RWPE1 (cell line): ENCODE measurements at regions of chr6 and their contacts with region 1.

Region 1: GRCh38 chr6:158991017-158991723 is 8.8 kb downstream of the RSPH3 start:
- DNase-seq: no peak
- H3K27ac ChIP-seq: no peak overlapping the region
- CTCF ChIP-seq: no peak

Region 2: GRCh38 chr6:158795516-158796075 is 195.6 kb before region 1 on chr6:
- CTCF ChIA-PET with region 1: interaction called, 12 read pairs
- POLR2A ChIA-PET with region 1: no interaction called
- DNase-seq: no peak
- H3K27ac ChIP-seq: no peak overlapping the region
- CTCF ChIP-seq: no peak

Region 3: DNA sequence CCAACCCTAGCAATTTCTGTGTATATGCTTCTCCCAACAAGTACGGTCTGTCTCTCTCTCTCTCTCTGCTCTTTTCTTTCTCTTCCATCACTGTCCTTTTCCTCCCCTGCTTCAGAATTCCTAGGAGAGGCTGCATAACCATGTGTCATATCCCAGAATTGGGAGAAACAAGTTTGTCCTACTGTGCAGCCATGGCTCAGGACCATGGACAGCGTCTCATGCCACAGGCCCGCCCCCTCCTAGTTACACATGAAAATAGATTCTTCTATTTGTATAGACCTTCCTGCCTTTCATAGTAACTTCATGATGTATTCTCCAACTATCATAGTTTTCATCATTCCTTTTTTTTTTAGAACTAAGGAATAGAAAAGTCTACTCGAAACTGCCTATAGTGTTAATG is 276.0 kb after region 1 on chr6:
- CTCF ChIA-PET with region 1: no interaction called
- POLR2A ChIA-PET with region 1: no interaction called
- DNase-seq: peak; percentile 55
- H3K27ac ChIP-seq: no peak overlapping the region
- CTCF ChIP-seq: no peak